ENCODE measurements at regions of chr9 and their contacts with region 1.

Region 1: DNA sequence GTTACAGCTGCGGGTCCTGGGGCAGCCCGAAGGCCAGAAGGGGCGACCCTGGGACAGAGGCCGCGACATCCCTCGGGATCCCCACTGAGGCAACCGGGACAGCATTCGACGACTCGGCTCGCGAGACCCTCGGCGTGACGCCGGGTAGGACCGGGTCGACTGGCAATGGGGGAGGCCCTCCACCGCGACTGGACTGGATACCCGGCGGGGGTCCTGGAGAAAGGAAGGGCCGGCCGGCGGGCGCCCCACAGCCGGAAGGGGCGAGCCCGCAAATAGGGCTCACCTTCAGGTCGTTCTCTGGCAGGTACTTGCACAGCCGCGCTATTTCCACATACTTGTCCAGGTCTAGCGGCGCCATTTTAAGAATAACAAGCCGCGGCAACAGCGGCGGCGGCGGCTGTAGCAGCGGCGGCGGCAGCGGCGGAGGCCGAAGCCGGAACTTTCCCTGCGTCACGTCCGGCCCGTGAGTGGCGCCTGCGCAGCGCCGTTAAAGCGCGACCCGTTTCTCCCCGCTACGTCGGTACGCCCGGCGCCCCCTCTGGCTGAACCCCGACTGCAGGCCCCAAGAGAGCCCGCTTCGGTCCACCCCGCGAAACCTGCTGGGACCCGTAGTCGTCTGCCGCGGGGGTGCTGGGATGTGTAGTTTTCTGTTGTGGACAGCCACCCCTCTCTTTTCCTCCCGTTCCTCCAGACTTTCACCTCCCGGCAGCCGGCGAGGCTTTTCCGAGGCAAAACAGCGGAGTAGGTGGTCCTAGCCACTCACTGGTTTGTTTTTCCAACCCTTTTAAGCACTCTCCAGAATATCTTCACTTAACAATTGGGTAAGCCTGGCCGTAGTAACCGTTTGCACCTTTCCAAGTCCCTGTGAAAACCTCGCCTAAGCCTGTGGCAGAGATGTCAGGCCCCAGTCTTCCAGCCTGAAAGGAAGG is at the start of gene PPP6C:
- DNase-seq: peak; percentile 99
- ATAC-seq: peak; percentile 96
- H3K4me3 Mint-ChIP-seq: peak within 1 kb of the TSS; percentile 83
- H3K27ac Mint-ChIP-seq: peak within 1 kb of the TSS; percentile 86
- H3K4me1 Mint-ChIP-seq: peaks cover 69% of the 10 kb centered on the region
- H3K27me3 Mint-ChIP-seq: no peaks in the 10 kb centered on the region
- total RNA-seq, gene PPP6C: 35.1 to 47.3 TPM

Region 2: GRCh38 chr9:124940693-124941453 is 248.8 kb before region 1 on chr9 and contains the start of gene GOLGA1:
- CTCF ChIA-PET with region 1: no interaction called
- POLR2A ChIA-PET with region 1: no interaction called
- intact Hi-C with region 1: loop called (anchors 1 to 5 kb)
- DNase-seq: peak; percentile 96
- ATAC-seq: peak; percentile 89
- H3K4me3 Mint-ChIP-seq: peak within 1 kb of the TSS; percentile 93
- H3K27ac Mint-ChIP-seq: peak within 1 kb of the TSS; percentile 99
- H3K4me1 Mint-ChIP-seq: peaks cover 20% of the 10 kb centered on the region
- H3K27me3 Mint-ChIP-seq: no peaks in the 10 kb centered on the region
- total RNA-seq, gene GOLGA1: 17.4 to 18.3 TPM

Region 3: DNA sequence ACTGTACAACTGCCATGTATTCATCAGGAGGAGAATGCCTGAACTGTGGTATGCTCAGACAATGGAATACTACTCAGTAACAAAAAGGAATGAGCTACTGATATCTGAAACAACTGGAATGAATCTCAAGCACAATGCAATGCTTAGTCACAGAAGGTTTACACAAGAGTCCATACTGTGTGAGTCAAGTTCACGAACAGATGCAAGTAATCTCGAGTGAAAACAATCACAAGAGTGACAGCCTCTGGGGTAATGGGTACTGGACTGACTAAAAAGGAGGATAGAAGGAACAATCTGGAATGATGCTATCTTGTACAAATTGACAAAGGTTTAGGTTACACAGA is 229.2 kb before region 1 on chr9:
- CTCF ChIA-PET with region 1: no interaction called
- POLR2A ChIA-PET with region 1: no interaction called
- intact Hi-C with region 1: no loop called
- DNase-seq: no peak
- ATAC-seq: no peak
- H3K4me3 Mint-ChIP-seq: no peak overlapping the region
- H3K27ac Mint-ChIP-seq: no peak overlapping the region
- H3K4me1 Mint-ChIP-seq: peaks cover 17% of the 10 kb centered on the region
- H3K27me3 Mint-ChIP-seq: no peaks in the 10 kb centered on the region

Region 4: GRCh38 chr9:125161284-125161918 is 28.2 kb before region 1 on chr9:
- CTCF ChIA-PET with region 1: no interaction called
- POLR2A ChIA-PET with region 1: no interaction called
- intact Hi-C with region 1: loop called in 1 of 2 experiments (anchors 1 kb)
- DNase-seq: no peak
- ATAC-seq: no peak
- H3K4me3 Mint-ChIP-seq: no peak overlapping the region
- H3K27ac Mint-ChIP-seq: no peak overlapping the region
- H3K4me1 Mint-ChIP-seq: peaks cover 6% of the 10 kb centered on the region
- H3K27me3 Mint-ChIP-seq: no peaks in the 10 kb centered on the region

Region 5: GRCh38 chr9:125200210-125201047 is 10.8 kb after region 1 on chr9 and contains the start of gene RABEPK:
- CTCF ChIA-PET with region 1: interaction called, 6 read pairs
- POLR2A ChIA-PET with region 1: interaction called, 6 read pairs
- intact Hi-C with region 1: loop called (anchors 1 kb)
- DNase-seq: peak; percentile 95
- ATAC-seq: peak; percentile 98
- H3K4me3 Mint-ChIP-seq: peak within 1 kb of the TSS; percentile 83
- H3K27ac Mint-ChIP-seq: peak within 1 kb of the TSS; percentile 80
- H3K4me1 Mint-ChIP-seq: peaks cover 30% of the 10 kb centered on the region
- H3K27me3 Mint-ChIP-seq: no peaks in the 10 kb centered on the region
- total RNA-seq, gene RABEPK: 29.1 to 33.1 TPM

Region 6: DNA sequence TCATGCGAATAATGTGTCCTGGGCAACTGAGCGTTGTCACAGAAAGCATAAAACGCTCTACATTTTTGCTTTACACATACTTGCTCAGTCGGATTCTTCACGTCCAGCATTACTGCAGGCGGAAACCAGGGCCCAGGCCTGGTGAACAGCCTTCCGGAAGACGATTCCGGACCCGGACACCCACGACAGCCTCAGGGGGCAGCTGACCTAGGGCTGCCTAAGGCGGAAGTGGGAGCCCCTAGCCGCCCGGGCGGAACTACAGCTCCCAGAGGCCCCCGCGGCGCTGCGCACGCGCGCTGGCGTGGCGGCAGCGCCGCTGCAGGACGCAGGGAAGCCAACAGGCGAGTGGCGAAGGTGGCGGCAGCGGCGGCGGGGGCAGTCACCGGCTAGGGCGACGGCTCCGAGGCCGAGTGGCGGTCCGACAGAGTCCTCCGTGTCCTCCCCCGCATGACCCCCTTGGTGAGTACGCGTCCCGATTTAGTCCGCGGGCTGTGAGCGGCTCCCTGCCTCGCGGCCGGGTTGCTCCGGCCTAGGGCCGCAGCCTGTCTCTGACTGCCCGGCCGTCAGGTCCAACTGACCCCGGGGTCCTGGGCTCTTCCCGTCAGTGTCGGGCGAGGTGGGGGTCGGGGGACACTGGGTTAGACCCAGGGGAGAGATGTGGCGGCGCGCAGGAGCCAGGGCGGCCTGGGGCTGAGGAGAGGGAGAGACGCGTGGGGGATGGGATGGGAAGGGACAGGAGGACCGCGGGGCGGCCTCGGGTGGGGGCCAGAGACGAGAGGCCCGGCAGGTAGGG is 72.1 kb after region 1 on chr9 and contains the start of gene GAPVD1:
- CTCF ChIA-PET with region 1: no interaction called
- POLR2A ChIA-PET with region 1: no interaction called
- intact Hi-C with region 1: loop called in 1 of 2 experiments (anchors 1 kb)
- DNase-seq: peak; percentile 94
- ATAC-seq: peak; percentile 99
- H3K4me3 Mint-ChIP-seq: peak within 1 kb of the TSS; percentile 99
- H3K27ac Mint-ChIP-seq: peak within 1 kb of the TSS; percentile 96
- H3K4me1 Mint-ChIP-seq: peaks cover 43% of the 10 kb centered on the region
- H3K27me3 Mint-ChIP-seq: no peaks in the 10 kb centered on the region
- total RNA-seq, gene GAPVD1: 41.6 to 47.7 TPM